Endothelial cell of umbilical vein (primary cell): ENCODE measurements at regions of chr1 and their contacts with region 1.

Region 1: GRCh38 chr1:150363426-150364230 is at the start of gene RPRD2:
- DNase-seq: peak; percentile 99
- H3K4me3 ChIP-seq: peak within 1 kb of the TSS; percentile 58 to 95 (median 84)
- H3K27ac ChIP-seq: peak within 1 kb of the TSS; percentile 75
- H3K4me1 ChIP-seq: peaks cover 18% of the 10 kb centered on the region
- H3K27me3 ChIP-seq: no peaks in the 10 kb centered on the region
- CTCF ChIP-seq: no peak
- POLR2A ChIP-seq: peak; percentile 97
- total RNA-seq, gene RPRD2: 23.9 and 24.5 TPM in 2 replicates

Region 2: DNA sequence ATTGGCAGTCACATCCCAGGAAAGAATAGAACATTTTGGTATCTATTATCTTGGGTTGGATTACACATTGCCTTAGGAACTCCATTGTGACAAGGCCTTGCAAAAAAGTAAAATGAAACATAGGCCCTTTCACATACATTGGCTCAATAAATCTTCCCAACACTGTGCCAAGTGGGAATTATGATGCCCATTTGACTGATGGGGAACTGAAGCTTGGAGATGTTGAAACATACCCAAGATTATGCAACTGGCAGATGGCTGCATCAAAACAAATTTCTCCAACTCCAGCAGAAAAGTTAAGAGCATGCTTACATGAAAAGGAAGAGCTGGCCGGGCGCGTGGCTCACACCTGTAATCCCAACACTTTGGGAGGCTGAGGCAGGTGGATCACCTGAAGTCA is 187.0 kb before region 1 on chr1:
- CTCF ChIA-PET with region 1: no interaction called
- POLR2A ChIA-PET with region 1: no interaction called
- dilution Hi-C with region 1: no loop called
- intact Hi-C with region 1: no loop called
- DNase-seq: no peak
- H3K4me3 ChIP-seq: no peak overlapping the region
- H3K27ac ChIP-seq: no peak overlapping the region
- H3K4me1 ChIP-seq: no peaks in the 10 kb centered on the region
- H3K27me3 ChIP-seq: no peaks in the 10 kb centered on the region
- CTCF ChIP-seq: no peak
- POLR2A ChIP-seq: no peak

Region 3: GRCh38 chr1:150235852-150236613 is 127.6 kb before region 1 on chr1 and contains the start of gene ANP32E:
- CTCF ChIA-PET with region 1: no interaction called
- POLR2A ChIA-PET with region 1: no interaction called
- dilution Hi-C with region 1: no loop called
- intact Hi-C with region 1: loop called (anchors 5 kb)
- DNase-seq: peak; percentile 99
- H3K4me3 ChIP-seq: peak within 1 kb of the TSS; percentile 72 to 95 (median 86)
- H3K27ac ChIP-seq: peak within 1 kb of the TSS; percentile 61
- H3K4me1 ChIP-seq: peaks cover 11% of the 10 kb centered on the region
- H3K27me3 ChIP-seq: no peaks in the 10 kb centered on the region
- CTCF ChIP-seq: no peak
- POLR2A ChIP-seq: peak; percentile 98
- total RNA-seq, gene ANP32E: 53.4 and 57.9 TPM in 2 replicates

Region 4: DNA sequence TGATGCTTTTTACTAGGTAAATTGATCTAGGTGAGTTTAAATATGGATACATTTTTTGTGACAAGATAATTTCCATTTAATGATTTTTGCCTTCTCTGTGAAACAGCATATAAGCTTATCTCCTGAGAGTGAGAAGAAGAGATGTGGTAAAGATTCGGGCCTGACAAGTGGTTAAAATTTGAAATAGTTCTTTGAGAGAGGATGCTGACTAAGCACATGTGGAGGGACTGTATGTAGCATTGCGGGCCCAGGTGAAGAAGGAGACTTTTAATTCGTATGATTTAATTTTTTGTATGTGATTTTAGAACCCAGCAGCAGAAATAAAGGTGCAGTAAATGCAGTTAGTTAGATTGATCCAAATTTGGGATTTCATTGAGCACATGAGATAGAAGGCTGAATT is 52.2 kb after region 1 on chr1:
- CTCF ChIA-PET with region 1: interaction called, 3 read pairs
- POLR2A ChIA-PET with region 1: no interaction called
- dilution Hi-C with region 1: no loop called
- intact Hi-C with region 1: loop called (anchors 5 kb)
- DNase-seq: no peak
- H3K4me3 ChIP-seq: no peak overlapping the region
- H3K27ac ChIP-seq: no peak overlapping the region
- H3K4me1 ChIP-seq: no peaks in the 10 kb centered on the region
- H3K27me3 ChIP-seq: no peaks in the 10 kb centered on the region
- CTCF ChIP-seq: no peak
- POLR2A ChIP-seq: no peak

Region 5: GRCh38 chr1:150456146-150456647 is 92.6 kb after region 1 on chr1:
- CTCF ChIA-PET with region 1: no interaction called
- POLR2A ChIA-PET with region 1: no interaction called
- dilution Hi-C with region 1: no loop called
- intact Hi-C with region 1: no loop called
- DNase-seq: no peak
- H3K4me3 ChIP-seq: no peak overlapping the region
- H3K27ac ChIP-seq: no peak overlapping the region
- H3K4me1 ChIP-seq: peaks cover 2% of the 10 kb centered on the region
- H3K27me3 ChIP-seq: no peaks in the 10 kb centered on the region
- CTCF ChIP-seq: no peak
- POLR2A ChIP-seq: no peak

Region 6: DNA sequence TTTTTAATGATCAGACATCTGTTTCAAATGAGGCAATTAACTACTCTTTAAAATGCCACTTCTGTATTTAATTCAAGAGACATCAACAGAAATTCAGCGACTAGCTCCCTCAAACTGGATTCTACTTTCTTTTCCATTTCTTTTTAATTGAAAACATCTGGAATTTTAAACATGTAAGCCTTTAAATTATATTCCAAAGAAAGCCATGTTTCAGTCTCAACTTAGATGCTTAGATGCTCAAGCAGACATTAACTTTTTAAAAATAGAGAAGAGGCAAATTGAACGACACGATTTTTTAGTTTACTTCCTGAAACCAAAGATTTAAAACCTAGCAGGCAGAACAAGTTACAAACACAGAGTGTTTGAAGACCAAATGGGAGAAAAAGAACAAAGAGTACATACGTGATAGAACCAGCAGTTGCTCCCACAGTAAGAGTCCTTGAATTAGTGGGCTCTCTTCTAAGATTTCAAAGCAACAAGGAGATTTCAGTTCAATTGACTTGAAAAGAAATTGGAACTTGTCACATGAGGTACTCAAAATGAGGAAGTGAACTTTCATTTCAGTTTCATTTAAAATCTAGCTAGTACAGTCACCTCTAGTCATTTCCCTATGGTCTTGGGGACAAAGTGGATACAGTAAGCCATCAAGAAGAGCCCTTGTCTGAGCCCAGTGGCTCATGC is 401.8 kb after region 1 on chr1 and contains the start of gene CTSS:
- CTCF ChIA-PET with region 1: no interaction called
- POLR2A ChIA-PET with region 1: no interaction called
- dilution Hi-C with region 1: no loop called
- intact Hi-C with region 1: no loop called
- DNase-seq: peak; percentile 58
- H3K4me3 ChIP-seq: peak within 1 kb of the TSS in 1 of 3 experiments; percentile 6
- H3K27ac ChIP-seq: peak within 1 kb of the TSS; percentile 80
- H3K4me1 ChIP-seq: peaks cover 23% of the 10 kb centered on the region
- H3K27me3 ChIP-seq: no peaks in the 10 kb centered on the region
- CTCF ChIP-seq: no peak
- POLR2A ChIP-seq: no peak
- total RNA-seq, gene CTSS: 5.7 and 11.1 TPM in 2 replicates